H1 (cell line): ENCODE measurements at regions of chr17 and their contacts with region 1.

Region 1: GRCh38 chr17:3602499-3602898 is 6.7 kb downstream of the TRPV1 start:
- DNase-seq: peak in 1 of 2 experiments; percentile 64
- H3K4me3 ChIP-seq: no peak overlapping the region
- H3K27ac ChIP-seq: no peak overlapping the region
- H3K4me1 ChIP-seq: no peaks in the 10 kb centered on the region
- H3K27me3 ChIP-seq: no peaks in the 10 kb centered on the region
- CTCF ChIP-seq: peak; percentile 40 to 80 (median 80)
- EP300 ChIP-seq: no peak
- POLR2A ChIP-seq: no peak
- RAD21 ChIP-seq: peak; percentile 42 to 67

Region 2: GRCh38 chr17:3556916-3557750 is 45.4 kb before region 1 on chr17:
- CTCF ChIA-PET with region 1: interaction called, 13 read pairs
- POLR2A ChIA-PET with region 1: no interaction called
- DNase-seq: no peak
- H3K4me3 ChIP-seq: no peak overlapping the region
- H3K27ac ChIP-seq: no peak overlapping the region
- H3K4me1 ChIP-seq: peaks cover 0 to 4% (median 0%) of the 10 kb centered on the region in 4 experiments; a peak in 1 of 7 replicates
- H3K27me3 ChIP-seq: no peaks in the 10 kb centered on the region
- CTCF ChIP-seq: no peak
- EP300 ChIP-seq: no peak
- POLR2A ChIP-seq: no peak
- RAD21 ChIP-seq: no peak

Region 3: DNA sequence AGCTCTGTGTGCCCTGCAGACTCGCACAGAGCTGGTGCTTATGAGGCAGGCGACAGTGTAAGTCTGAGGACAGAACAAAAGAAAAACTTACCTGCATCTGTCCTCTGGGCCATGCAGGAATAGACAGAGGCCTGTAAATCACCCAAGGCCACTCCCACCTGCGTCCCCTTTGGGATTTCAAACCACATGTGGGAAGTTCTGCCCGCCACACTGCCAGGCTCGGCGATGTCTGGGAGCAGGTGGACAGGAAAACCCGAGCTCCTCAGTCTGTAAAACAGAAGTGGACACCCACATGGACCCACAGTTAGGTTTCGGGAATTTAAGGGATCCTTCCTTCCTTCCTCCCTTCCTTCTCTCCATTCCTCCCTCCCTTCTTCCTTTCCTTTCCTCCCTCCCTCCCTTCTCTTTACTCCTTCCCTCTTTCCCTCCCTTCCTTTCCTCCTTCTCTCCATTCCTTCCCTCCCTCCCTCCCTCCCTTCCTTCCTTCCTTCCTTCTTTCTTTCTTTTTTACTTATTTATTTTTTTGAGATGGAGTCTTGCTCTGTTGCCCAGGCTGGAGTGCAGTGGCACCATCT is 18.7 kb after region 1 on chr17:
- CTCF ChIA-PET with region 1: interaction called, 30 read pairs
- POLR2A ChIA-PET with region 1: no interaction called
- DNase-seq: no peak
- H3K4me3 ChIP-seq: no peak overlapping the region
- H3K27ac ChIP-seq: no peak overlapping the region
- H3K4me1 ChIP-seq: no peaks in the 10 kb centered on the region
- H3K27me3 ChIP-seq: no peaks in the 10 kb centered on the region
- CTCF ChIP-seq: no peak
- EP300 ChIP-seq: no peak
- POLR2A ChIP-seq: no peak
- RAD21 ChIP-seq: no peak